ENCODE measurements at regions of chr1 and their contacts with region 1.

Region 1: GRCh38 chr1:119613769-119614720 is 34.0 kb downstream of the ZNF697 start:
- DNase-seq: peak; percentile 76
- H3K4me3 ChIP-seq: no peak overlapping the region
- H3K27ac ChIP-seq: no peak overlapping the region
- H3K4me1 ChIP-seq: no peaks in the 10 kb centered on the region
- H3K27me3 ChIP-seq: no peaks in the 10 kb centered on the region
- CTCF ChIP-seq: peak; percentile 59 to 85

Region 2: DNA sequence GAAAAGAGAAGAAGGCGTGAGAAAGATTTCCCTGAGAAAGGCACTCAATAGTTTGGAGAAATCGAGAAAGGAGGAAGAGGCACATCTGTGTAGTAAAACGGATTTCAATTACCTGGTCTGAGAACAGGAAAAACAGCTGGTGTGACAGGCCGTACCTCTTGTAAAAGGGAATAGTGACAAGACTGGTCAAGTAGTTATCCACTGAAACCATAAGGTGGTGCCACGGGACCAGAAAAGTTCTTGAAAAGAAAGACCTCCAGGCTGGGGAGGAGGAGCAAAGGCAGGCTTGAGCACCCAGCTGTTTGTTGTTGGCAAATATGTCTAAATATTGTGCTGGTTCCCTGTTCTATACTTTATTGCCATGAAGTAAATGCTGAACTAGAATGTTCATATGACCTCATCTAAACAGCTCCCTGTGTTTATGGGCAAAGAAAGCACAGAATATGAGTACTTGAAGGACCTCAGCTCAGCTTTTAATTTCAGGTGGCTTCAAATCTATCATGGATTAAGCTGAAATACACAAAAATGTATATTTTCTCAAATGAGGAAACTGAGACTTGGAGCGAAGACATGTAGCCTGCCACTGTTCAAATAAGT is 241.5 kb before region 1 on chr1:
- CTCF ChIA-PET with region 1: no interaction called
- dilution Hi-C with region 1: no loop called
- in situ Hi-C with region 1: no loop called
- intact Hi-C with region 1: loop called (anchors 2 kb)
- DNase-seq: peak; percentile 57
- H3K4me3 ChIP-seq: no peak overlapping the region
- H3K27ac ChIP-seq: no peak overlapping the region
- H3K4me1 ChIP-seq: peaks cover 16% of the 10 kb centered on the region
- H3K27me3 ChIP-seq: no peaks in the 10 kb centered on the region
- CTCF ChIP-seq: peak; percentile 26 to 48

Region 3: DNA sequence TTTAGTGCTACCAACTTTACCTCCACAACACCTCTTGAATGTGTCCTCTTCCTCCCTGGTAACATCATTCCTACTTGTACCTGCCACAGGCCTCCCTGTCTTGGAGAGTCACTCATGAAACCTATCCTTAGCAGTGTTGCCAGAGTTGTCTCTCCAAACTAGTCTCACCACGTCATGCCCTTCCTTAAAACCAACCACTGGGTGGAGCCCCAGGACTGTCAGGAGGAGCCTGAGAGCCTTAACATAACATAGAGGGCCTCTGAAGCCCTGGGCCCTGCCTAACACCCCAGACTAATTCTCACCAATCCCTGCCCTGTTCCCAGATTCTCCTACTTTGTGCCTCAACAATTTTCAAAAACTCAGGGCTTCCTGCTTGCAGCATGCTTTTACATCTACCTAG is 31.2 kb before region 1 on chr1:
- CTCF ChIA-PET with region 1: interaction called, 3 read pairs
- dilution Hi-C with region 1: no loop called
- in situ Hi-C with region 1: no loop called
- intact Hi-C with region 1: loop called (anchors 1 kb)
- DNase-seq: peak; percentile 78
- H3K4me3 ChIP-seq: no peak overlapping the region
- H3K27ac ChIP-seq: no peak overlapping the region
- H3K4me1 ChIP-seq: peaks cover 4% of the 10 kb centered on the region
- H3K27me3 ChIP-seq: no peaks in the 10 kb centered on the region
- CTCF ChIP-seq: peak; percentile 49 to 81

Region 4: DNA sequence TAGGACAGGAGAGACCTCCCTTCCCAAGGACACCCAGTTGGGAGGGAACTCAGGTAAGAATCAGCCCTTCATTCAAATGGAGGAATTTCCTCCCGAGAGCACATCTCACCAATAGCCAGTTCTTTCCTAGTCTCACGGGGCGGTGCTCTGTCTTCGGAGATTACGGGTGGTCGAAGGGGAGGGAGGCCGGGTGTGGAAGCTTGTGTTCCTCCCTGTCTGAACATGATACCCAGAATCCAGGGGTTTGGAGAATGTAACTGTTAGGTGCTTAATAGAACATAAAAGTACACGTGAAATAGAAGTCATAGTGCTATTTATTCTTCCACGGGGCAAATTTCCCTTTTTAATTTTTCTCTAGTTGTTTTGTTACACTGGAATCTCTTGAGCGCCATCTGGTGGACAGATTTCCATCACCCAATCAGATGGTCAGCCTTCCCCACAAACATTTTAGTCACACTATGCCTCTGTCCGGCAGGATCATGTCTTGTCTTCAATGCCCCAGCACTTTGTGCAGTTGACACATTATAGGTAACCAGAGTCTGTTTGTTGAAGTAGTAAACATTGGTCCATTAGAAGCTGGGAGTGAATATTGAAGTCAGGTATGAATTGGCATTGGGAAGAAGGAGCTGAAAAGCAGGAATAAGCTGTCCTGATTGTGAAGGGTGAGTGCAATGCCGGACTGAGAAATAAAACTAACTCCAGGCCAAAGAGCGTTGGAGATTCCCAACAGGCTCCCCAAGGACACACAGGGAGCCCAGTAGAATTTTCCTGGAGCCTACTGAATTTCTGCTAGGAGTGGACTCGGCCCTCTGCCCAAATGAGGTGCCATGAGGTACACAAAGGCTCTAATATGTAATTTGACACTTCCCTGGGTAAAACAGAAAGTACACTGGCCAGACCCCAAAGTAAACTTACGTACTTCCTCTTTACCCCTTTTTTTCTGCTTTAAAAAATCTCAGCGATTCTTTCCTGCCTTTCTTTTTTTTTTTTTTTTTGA is 61.6 kb after region 1 on chr1:
- CTCF ChIA-PET with region 1: interaction called, 4 read pairs
- dilution Hi-C with region 1: no loop called
- in situ Hi-C with region 1: no loop called
- intact Hi-C with region 1: loop called (anchors 1 kb)
- DNase-seq: peak; percentile 78
- H3K4me3 ChIP-seq: peak overlapping the region; percentile 42 to 45 (median 43)
- H3K27ac ChIP-seq: peak overlapping the region; percentile 87
- H3K4me1 ChIP-seq: peaks cover 36% of the 10 kb centered on the region
- H3K27me3 ChIP-seq: no peaks in the 10 kb centered on the region
- CTCF ChIP-seq: peak; percentile 76 to 79

Region 5: DNA sequence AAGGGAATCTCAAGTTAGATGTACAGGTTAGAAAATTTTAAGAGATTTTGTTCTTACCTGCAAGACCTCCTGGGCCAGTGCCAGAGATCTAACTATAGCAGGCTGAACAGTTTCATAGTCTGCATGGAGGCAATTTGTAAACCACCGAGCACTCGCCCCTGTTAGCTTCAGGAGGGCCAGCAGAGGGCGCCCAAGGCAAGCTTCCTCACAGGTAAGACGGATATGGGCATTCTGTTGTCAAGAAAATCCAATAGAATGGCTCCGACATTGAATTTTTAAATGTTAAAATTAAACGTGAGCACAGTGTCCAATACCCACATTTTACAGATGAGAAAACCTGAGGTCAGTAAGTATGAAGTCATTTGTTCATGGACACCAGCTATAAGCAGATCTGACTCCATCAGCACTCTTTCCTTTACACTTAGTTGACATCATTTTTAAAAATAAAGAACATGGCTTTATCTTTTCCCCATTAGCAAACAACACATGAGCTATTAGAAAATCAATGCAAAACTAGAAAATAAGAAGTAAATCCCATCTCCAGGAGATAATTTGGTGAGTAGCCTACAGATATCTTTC is 195.0 kb after region 1 on chr1:
- CTCF ChIA-PET with region 1: no interaction called
- dilution Hi-C with region 1: no loop called
- in situ Hi-C with region 1: no loop called
- intact Hi-C with region 1: loop called (anchors 2 kb)
- DNase-seq: peak; percentile 54
- H3K4me3 ChIP-seq: no peak overlapping the region
- H3K27ac ChIP-seq: no peak overlapping the region
- H3K4me1 ChIP-seq: peaks cover 5% of the 10 kb centered on the region
- H3K27me3 ChIP-seq: no peaks in the 10 kb centered on the region
- CTCF ChIP-seq: peak; percentile 94